ENCODE measurements at regions of chr1 and their contacts with region 1.

Region 1: GRCh38 chr1:162878000-162878596 is 17.1 kb upstream of the CCDC190 start:
- DNase-seq: peak; percentile 17
- CTCF ChIP-seq: peak; percentile 57

Region 2: GRCh38 chr1:162177126-162177525 is 701.0 kb before region 1 on chr1:
- in situ Hi-C with region 1: no loop called
- DNase-seq: no peak
- CTCF ChIP-seq: no peak

Region 3: GRCh38 chr1:162357681-162358266 is 520.3 kb before region 1 on chr1:
- in situ Hi-C with region 1: no loop called
- DNase-seq: peak; percentile 56
- CTCF ChIP-seq: peak; percentile 58

Region 4: GRCh38 chr1:162823771-162824525 is 54.1 kb before region 1 on chr1:
- in situ Hi-C with region 1: no loop called
- DNase-seq: no peak
- CTCF ChIP-seq: no peak

Region 5: DNA sequence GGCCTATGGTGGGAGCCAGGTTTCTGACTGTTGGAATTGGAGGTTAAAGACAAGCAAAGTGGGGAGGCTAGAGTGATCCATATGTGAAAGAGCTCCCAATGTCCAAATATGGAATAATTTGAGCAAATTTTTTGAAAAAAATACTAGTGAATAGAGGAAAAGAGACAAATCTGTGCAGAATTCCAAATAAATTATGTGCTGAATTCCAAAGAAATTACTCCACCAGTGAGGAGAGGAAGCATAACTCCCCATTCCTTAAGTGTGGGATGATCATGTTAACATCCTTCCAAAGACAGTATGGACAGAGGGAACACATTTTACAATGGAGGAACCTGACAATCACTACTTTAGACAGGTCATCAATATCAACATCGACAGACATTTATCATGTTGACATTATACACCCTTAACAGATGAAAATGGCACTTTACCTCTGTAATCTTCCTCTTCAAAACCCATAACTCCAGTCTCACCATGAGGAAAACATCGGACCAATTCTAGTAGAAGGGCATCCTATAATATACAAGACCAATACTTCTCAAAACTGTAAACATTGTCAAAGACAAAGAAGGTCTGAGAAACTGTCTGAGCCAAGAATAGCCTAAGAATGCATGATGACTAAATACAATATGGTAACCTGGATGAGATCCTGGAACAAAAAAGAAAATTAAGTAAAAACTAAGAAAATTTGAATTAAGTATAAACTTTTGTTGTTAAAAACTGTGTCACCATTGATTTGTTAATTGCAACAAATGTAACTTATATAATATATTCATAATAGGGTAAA is 119.6 kb after region 1 on chr1:
- in situ Hi-C with region 1: no loop called
- DNase-seq: no peak
- CTCF ChIP-seq: no peak

Region 6: GRCh38 chr1:163174524-163175437 is 296.7 kb after region 1 on chr1:
- in situ Hi-C with region 1: loop called (anchors 25 kb)
- DNase-seq: peak; percentile 48
- CTCF ChIP-seq: peak; percentile 79